Endothelial cell of umbilical vein (primary cell): ENCODE measurements at regions of chr12 and their contacts with region 1.

Region 1: GRCh38 chr12:44942714-44943113 is 66.6 kb upstream of the NELL2 start:
- DNase-seq: no peak
- H3K4me3 ChIP-seq: no peak overlapping the region
- H3K27ac ChIP-seq: no peak overlapping the region
- H3K4me1 ChIP-seq: no peaks in the 10 kb centered on the region
- H3K27me3 ChIP-seq: peaks cover 0 to 13% of the 10 kb centered on the region in 2 experiments
- CTCF ChIP-seq: no peak
- POLR2A ChIP-seq: no peak

Region 2: DNA sequence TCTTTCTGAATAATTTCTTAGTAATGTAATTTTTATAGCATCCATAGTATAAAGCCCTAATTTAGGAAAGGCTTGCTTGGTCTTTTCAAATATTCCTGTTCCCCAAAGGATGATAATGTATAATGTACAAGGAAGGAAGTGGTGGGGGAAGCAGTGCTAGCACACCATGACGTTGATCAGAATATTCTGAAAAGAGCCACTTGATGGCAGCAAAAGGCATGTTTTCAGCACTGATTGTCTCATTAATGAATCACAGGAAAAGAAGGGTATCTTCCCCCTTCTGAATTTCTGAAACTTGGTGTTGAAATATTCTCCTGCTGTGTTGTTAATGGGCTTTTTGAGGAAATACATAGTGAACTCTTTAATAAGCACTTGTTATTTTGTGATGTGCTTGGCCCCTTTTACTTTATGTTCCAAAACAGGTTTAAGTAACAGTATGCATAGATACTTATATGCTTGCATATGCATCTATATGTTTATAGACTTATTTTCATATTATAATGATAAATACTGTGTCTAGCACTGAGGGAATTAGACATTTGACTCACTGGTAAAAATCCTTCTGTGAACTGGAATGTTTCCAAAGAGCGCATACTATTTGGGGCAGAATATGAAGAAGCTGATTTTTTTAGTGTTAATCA is 984.9 kb before region 1 on chr12:
- CTCF ChIA-PET with region 1: no interaction called
- POLR2A ChIA-PET with region 1: no interaction called
- dilution Hi-C with region 1: no loop called
- intact Hi-C with region 1: loop called (anchors 5 kb)
- DNase-seq: peak; percentile 50
- H3K4me3 ChIP-seq: no peak overlapping the region
- H3K27ac ChIP-seq: no peak overlapping the region
- H3K4me1 ChIP-seq: no peaks in the 10 kb centered on the region
- H3K27me3 ChIP-seq: no peaks in the 10 kb centered on the region
- CTCF ChIP-seq: peak; percentile 33 to 34
- POLR2A ChIP-seq: no peak

Region 3: GRCh38 chr12:44317651-44318126 is 625.0 kb before region 1 on chr12:
- CTCF ChIA-PET with region 1: no interaction called
- POLR2A ChIA-PET with region 1: no interaction called
- dilution Hi-C with region 1: no loop called
- intact Hi-C with region 1: loop called (anchors 10 kb)
- DNase-seq: peak; percentile 7
- H3K4me3 ChIP-seq: no peak overlapping the region
- H3K27ac ChIP-seq: no peak overlapping the region
- H3K4me1 ChIP-seq: no peaks in the 10 kb centered on the region
- H3K27me3 ChIP-seq: no peaks in the 10 kb centered on the region
- CTCF ChIP-seq: peak in 1 of 2 donors; percentile 38
- POLR2A ChIP-seq: no peak

Region 4: GRCh38 chr12:46198913-46199312 is 1256.2 kb after region 1 on chr12:
- CTCF ChIA-PET with region 1: no interaction called
- POLR2A ChIA-PET with region 1: no interaction called
- dilution Hi-C with region 1: no loop called
- intact Hi-C with region 1: no loop called
- DNase-seq: no peak
- H3K4me3 ChIP-seq: no peak overlapping the region
- H3K27ac ChIP-seq: no peak overlapping the region
- H3K4me1 ChIP-seq: no peaks in the 10 kb centered on the region
- H3K27me3 ChIP-seq: no peaks in the 10 kb centered on the region
- CTCF ChIP-seq: no peak
- POLR2A ChIP-seq: no peak